ENCODE measurements at regions of chr2 and their contacts with region 1.

Region 1: DNA sequence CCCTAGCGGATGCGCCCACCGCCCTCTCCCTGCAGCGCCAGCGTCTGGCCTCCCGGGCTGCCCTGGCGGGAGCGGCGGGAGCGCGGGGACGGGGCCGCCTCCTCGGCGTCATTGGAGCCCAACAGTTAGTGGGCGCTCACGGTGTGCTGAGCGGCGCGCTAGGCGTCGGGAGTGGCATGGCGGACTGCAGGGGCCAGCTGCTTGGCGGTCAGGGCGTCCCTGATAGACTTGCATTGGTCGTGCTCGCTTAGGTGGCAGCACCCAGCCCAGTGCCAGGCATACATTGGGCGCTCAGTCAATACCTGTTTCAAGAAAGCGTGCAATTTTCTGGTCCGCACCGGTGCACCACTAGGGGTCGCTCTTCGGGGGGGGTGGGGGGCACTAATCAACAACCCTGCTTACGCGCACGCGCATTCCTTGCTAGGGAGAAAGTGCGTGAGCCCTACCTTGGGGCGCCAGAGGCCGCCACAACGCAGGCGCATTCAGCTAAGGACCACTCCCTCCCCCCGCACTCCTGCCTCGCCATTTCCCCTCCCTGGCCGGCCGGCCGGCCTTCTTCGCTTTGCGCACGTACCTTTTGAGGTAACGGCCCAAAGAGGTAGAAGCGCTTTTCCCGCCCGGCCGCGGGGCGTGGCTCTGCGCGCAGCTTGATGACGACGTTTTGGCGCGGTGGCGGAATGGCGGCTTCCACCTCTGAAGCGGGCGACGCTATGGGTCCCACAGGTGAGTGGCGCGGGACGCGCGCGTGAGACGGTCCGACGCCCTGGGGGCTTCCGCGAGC is 411 bp upstream of the MZT2A start:
- DNase-seq: peak; percentile 98
- H3K4me3 Mint-ChIP-seq: peak overlapping the region; percentile 98
- H3K27ac Mint-ChIP-seq: peak overlapping the region; percentile 98
- H3K4me1 Mint-ChIP-seq: peaks cover 37% of the 10 kb centered on the region
- H3K27me3 Mint-ChIP-seq: no peaks in the 10 kb centered on the region

Region 2: GRCh38 chr2:131093006-131093695 is 399.5 kb before region 1 on chr2 and contains the start of gene FAM168B:
- intact Hi-C with region 1: loop called (anchors 2 kb)
- DNase-seq: peak; percentile 97
- H3K4me3 Mint-ChIP-seq: peak within 1 kb of the TSS; percentile 95
- H3K27ac Mint-ChIP-seq: peak within 1 kb of the TSS; percentile 97
- H3K4me1 Mint-ChIP-seq: peaks cover 13% of the 10 kb centered on the region
- H3K27me3 Mint-ChIP-seq: peaks cover 7% of the 10 kb centered on the region
- total RNA-seq, gene FAM168B: 82.3 and 85.6 TPM in 2 replicates

Region 3: GRCh38 chr2:131154071-131154531 is 338.5 kb before region 1 on chr2:
- intact Hi-C with region 1: loop called (anchors 1 kb)
- DNase-seq: peak; percentile 90
- H3K4me3 Mint-ChIP-seq: peak overlapping the region; percentile 2
- H3K27ac Mint-ChIP-seq: no peak overlapping the region
- H3K4me1 Mint-ChIP-seq: peaks cover 21% of the 10 kb centered on the region
- H3K27me3 Mint-ChIP-seq: no peaks in the 10 kb centered on the region

Region 4: DNA sequence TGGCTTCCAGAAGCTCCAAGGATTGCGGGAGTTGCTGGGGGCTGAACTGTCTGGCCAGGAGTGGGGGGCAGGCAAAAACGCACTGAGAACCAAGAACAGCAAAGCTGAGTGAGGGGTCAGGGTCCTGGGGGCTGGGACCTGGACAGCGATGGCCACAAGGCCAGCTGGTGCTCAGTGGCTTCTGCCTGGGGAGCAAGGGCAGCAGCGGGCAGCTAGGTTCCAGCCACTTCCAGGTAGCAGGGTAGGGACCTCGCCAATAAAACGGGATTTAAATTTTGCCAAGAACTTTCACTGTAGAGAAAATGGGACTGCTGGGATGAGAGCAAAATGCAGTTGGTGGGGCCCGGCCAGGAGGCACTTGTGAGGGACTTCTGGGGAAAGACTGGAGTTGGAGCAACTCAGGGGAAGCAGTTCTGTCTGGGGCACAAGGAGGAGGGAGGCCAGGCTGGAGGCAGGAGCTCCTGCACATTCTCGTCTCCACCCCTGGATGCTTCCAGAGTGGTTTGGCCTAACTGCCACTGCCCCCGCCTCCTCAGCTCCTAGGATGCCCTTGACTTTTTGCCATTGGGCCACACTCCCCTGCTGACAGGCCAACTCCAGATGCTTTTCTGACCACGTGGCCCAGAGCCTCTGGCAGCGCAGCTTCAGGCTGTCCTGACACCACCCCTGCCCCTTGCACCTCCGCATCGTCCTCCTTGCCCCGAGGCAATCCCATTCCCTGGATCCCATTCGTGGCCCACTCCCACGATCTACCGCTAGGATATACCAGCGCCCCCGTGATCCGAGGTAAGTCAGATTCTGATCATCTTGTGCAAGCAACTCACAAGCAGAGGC is 29.6 kb after region 1 on chr2:
- intact Hi-C with region 1: loop called (anchors 2 kb)
- DNase-seq: no peak
- H3K4me3 Mint-ChIP-seq: no peak overlapping the region
- H3K27ac Mint-ChIP-seq: no peak overlapping the region
- H3K4me1 Mint-ChIP-seq: no peaks in the 10 kb centered on the region
- H3K27me3 Mint-ChIP-seq: no peaks in the 10 kb centered on the region

Measured in activated CD4-positive, alpha-beta T cell treated with anti-CD3 and anti-CD28 coated beads, Interleukin-2, amount 10 ng/mL, durations not matched to agents 24 days and 14 days (primary cell).